Thyroid gland (tissue), 4 donors: ENCODE measurements at regions of chr12 and their contacts with region 1.

Region 1: GRCh38 chr12:110501752-110502738 is at the starts of genes RAD9B and VPS29:
- DNase-seq: peak; percentile 98 to 99
- H3K4me3 ChIP-seq: peak within 1 kb of the TSS; percentile 67 to 77 (median 71)
- H3K27ac ChIP-seq: peak within 1 kb of the TSS; percentile 1 to 80 (median 77)
- H3K4me1 ChIP-seq: peaks cover 9 to 13% of the 10 kb centered on the region in 2 donors
- H3K27me3 ChIP-seq: no peaks in the 10 kb centered on the region
- CTCF ChIP-seq: peak in 1 of 6 experiments; percentile 6
- POLR2A ChIP-seq: peak in 1 of 2 donors; percentile 87
- total RNA-seq, gene RAD9B: 0.40 to 0.45 TPM in 2 of 4 donors, not detected in the others
- total RNA-seq, gene VPS29: 94.0 to 188 (median 133) TPM

Region 2: GRCh38 chr12:110468212-110469048 is 33.6 kb before region 1 on chr12 and contains the starts of genes FAM216A and GPN3:
- intact Hi-C with region 1: loop called (anchors 5 kb)
- DNase-seq: peak; percentile 96 to 98
- H3K4me3 ChIP-seq: peak within 1 kb of the TSS; percentile 79 to 90 (median 84)
- H3K27ac ChIP-seq: peak within 1 kb of the TSS; percentile 70 to 94 (median 73)
- H3K4me1 ChIP-seq: peaks cover 20 to 21% of the 10 kb centered on the region in 2 donors
- H3K27me3 ChIP-seq: no peaks in the 10 kb centered on the region
- CTCF ChIP-seq: no peak
- POLR2A ChIP-seq: peak in 1 of 2 donors; percentile 82
- total RNA-seq, gene FAM216A: 2.6 to 10.1 (median 5.5) TPM
- total RNA-seq, gene GPN3: 17.1 to 23.6 (median 17.9) TPM

Region 3: GRCh38 chr12:110647631-110648040 is 145.6 kb after region 1 on chr12:
- intact Hi-C with region 1: no loop called
- DNase-seq: no peak
- H3K4me3 ChIP-seq: no peak overlapping the region
- H3K27ac ChIP-seq: no peak overlapping the region
- H3K4me1 ChIP-seq: no peaks in the 10 kb centered on the region
- H3K27me3 ChIP-seq: no peaks in the 10 kb centered on the region
- CTCF ChIP-seq: no peak
- POLR2A ChIP-seq: no peak